ENCODE measurements at regions of chr5 and their contacts with region 1.

Region 1: DNA sequence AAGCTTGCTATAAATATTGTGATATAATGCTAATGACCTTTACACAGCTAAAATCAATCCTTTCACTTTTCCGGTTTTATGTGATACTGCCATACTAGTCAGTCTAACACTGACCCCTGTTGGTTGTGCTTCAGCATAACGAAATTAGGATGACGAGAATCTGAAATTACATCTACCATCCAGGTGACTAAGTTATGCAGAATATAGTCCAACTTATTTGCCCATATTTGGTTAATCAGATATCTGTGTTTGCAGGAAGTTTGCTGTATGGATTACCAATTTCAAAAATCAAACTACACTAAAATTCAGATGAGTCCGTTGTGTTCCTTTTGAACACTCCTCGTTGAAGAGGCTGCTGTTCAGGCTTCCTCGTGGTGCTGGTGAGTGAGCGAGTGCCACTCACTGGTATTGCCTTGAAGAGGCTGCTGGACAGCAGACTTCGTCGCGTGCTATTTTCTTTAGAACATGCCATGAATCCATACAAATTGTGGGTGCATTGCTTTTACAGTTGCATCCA is 32.5 kb downstream of the TENT4A start:
- DNase-seq: peak; percentile 67 to 88 (median 79)
- H3K4me3 ChIP-seq: no peak overlapping the region
- H3K27ac ChIP-seq: no peak overlapping the region
- H3K4me1 ChIP-seq: no peaks in the 10 kb centered on the region
- H3K27me3 ChIP-seq: no peaks in the 10 kb centered on the region

Region 2: GRCh38 chr5:6592601-6593000 is 153.2 kb before region 1 on chr5:
- CTCF ChIA-PET with region 1: no interaction called
- POLR2A ChIA-PET with region 1: no interaction called
- DNase-seq: no peak
- H3K4me3 ChIP-seq: no peak overlapping the region
- H3K27ac ChIP-seq: no peak overlapping the region
- H3K4me1 ChIP-seq: no peaks in the 10 kb centered on the region
- H3K27me3 ChIP-seq: no peaks in the 10 kb centered on the region

Region 3: GRCh38 chr5:6626508-6626907 is 119.3 kb before region 1 on chr5:
- CTCF ChIA-PET with region 1: interaction called, 12 read pairs
- POLR2A ChIA-PET with region 1: no interaction called
- DNase-seq: no peak
- H3K4me3 ChIP-seq: no peak overlapping the region
- H3K27ac ChIP-seq: no peak overlapping the region
- H3K4me1 ChIP-seq: peaks cover 0 to 5% (median 2%) of the 10 kb centered on the region in 4 experiments
- H3K27me3 ChIP-seq: no peaks in the 10 kb centered on the region

Region 4: DNA sequence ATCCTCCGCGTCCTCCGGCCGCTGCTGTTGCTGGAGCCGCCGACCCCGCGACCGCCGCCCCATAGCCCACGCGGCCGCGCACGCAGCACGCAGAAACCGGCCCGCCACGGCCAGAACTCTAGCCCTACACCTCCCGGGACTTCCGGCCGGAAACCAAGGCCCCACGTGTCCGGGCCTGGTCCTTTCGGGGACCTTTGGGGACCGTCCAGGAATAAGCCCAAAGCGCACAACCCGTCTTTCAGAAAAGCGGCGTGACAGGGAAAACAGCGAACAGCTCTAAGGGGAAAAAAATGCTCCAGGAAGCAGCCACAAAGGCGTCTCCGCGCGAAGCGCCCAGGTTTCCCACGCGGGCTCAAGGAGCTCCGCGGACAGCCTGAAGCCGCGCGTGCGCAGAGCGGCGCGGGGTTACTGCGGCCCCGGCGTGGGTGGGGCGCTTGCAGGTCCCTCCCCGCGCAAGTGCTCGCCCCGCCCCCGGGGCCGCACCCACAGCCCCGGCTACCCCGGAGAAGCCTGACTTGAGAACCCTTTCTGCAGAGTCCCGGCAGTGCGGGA is 112.8 kb before region 1 on chr5 and contains the starts of genes NSUN2 and SRD5A1:
- CTCF ChIA-PET with region 1: interaction called, 12 read pairs
- POLR2A ChIA-PET with region 1: no interaction called
- DNase-seq: peak; percentile 92 to 95 (median 94)
- H3K4me3 ChIP-seq: peak within 1 kb of the TSS; percentile 83 to 96 (median 91)
- H3K27ac ChIP-seq: peak within 1 kb of the TSS; percentile 96 to 99
- H3K4me1 ChIP-seq: peaks cover 3 to 25% (median 20%) of the 10 kb centered on the region in 4 experiments
- H3K27me3 ChIP-seq: no peaks in the 10 kb centered on the region

Region 5: DNA sequence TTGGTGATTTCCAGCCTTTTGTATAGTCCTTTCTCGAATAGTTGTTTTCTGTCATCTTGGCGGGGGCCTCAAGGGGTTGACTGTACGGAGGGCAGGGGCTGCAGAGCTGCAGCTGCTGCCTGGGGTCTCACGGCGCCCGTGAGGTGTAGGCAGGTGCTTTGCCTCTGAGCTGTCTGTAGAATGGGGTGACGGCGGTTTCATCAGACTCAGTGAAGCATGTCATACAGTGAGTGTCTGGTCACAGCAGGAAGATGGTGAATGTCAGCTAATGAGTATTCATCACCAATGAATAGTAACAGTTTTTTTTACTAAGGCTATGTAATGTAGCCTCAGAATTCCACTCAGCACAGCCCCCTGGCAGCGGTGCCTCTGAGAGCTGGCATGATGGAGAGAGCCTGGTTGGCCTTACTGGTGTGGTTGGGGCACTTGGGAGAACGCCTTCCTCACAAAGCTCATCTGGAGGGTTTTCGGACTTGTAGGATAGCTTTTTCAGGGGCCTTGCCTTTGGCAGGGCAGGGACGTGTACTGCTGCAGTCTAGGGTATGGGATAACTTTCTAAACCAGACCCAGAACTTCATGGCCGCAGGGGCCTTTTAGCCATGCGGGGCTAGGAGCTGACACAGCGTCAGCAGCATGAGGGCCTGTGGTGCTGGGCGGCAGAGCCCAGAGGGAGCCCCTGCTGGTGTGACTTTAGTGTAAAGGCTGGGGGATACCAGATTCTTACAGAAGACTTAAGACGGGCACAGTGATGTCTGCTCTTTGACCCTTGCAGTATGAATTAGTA is 17.6 kb before region 1 on chr5:
- CTCF ChIA-PET with region 1: interaction called, 52 read pairs
- POLR2A ChIA-PET with region 1: no interaction called
- DNase-seq: no peak
- H3K4me3 ChIP-seq: no peak overlapping the region
- H3K27ac ChIP-seq: no peak overlapping the region
- H3K4me1 ChIP-seq: peaks cover 2 to 52% (median 39%) of the 10 kb centered on the region in 4 experiments
- H3K27me3 ChIP-seq: no peaks in the 10 kb centered on the region

Measured in common myeloid progenitor, CD34-positive (primary cell).